HEK293 (cell line): ENCODE measurements at regions of chr7 and their contacts with region 1.

Region 1: GRCh38 chr7:29189743-29190201 is 4.8 kb upstream of the CHN2 start:
- H3K4me3 ChIP-seq: no peak overlapping the region
- H3K27ac ChIP-seq: peak overlapping the region; percentile 30; the same call in 1 of the 2 replicates
- H3K4me1 ChIP-seq: peaks cover 11% of the 10 kb centered on the region
- CTCF ChIP-seq: peak; percentile 58

Region 2: DNA sequence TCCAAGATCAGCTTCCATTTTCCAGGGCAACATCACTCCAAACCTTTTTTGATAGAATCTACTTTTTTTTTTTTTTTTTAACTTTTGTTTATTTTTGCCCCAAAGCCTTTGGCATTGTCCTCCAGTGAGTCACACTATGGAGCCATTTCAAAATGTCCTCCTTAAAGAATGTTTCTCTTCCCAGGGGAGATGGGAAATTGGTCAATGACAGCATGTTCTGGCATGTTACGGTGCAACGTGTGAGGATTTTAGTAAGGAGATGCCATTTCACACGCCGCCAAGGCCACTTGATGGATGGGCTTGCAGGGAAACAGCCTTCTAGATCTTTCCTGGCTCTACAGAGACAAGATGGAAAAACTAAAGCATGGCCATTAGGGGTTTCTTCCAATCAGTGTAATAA is 201.0 kb before region 1 on chr7:
- CTCF ChIA-PET with region 1: no interaction called
- POLR2A ChIA-PET with region 1: no interaction called
- H3K4me3 ChIP-seq: no peak overlapping the region
- H3K27ac ChIP-seq: no peak overlapping the region
- H3K4me1 ChIP-seq: no peaks in the 10 kb centered on the region; the same call in 1 of the 2 replicates
- CTCF ChIP-seq: no peak

Region 3: GRCh38 chr7:29156907-29157452 is 32.8 kb before region 1 on chr7:
- CTCF ChIA-PET with region 1: interaction called, 16 read pairs
- POLR2A ChIA-PET with region 1: no interaction called
- H3K4me3 ChIP-seq: no peak overlapping the region
- H3K27ac ChIP-seq: no peak overlapping the region
- H3K4me1 ChIP-seq: 0 out of 2 replicates have a peak, but pooled peaks cover 8% of the 10 kb centered on the region
- CTCF ChIP-seq: peak; percentile 17; the same call in 1 of the 2 replicates

Region 4: GRCh38 chr7:29204491-29205272 is 14.9 kb after region 1 on chr7:
- CTCF ChIA-PET with region 1: interaction called, 17 read pairs
- POLR2A ChIA-PET with region 1: no interaction called
- H3K4me3 ChIP-seq: no peak overlapping the region
- H3K27ac ChIP-seq: no peak overlapping the region
- H3K4me1 ChIP-seq: peaks cover 9% of the 10 kb centered on the region; the same call in 1 of the 2 replicates
- CTCF ChIP-seq: no peak

Region 5: DNA sequence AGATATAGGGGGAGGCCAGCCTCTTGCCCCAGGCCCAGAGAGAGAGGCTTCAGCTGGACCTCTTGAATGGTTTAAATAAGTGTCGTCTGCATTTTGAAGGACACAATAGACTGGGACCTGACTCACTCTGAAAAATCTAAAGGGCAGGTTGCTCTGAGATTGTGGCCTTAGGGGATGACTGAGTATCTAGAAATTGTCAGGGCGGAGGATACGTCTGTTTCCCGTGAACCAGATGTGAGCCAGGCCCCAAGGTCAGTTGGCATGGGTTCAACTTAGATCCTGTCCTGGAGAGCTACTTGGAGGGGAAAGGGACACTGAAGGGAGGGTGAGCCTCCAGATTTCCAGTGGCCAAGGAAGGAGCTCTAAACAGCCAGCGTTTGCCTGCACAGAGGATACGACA is 115.0 kb after region 1 on chr7:
- CTCF ChIA-PET with region 1: interaction called, 10 read pairs
- POLR2A ChIA-PET with region 1: no interaction called
- H3K4me3 ChIP-seq: no peak overlapping the region
- H3K27ac ChIP-seq: no peak overlapping the region
- H3K4me1 ChIP-seq: 0 out of 2 replicates have a peak, but pooled peaks cover 5% of the 10 kb centered on the region
- CTCF ChIP-seq: no peak

Region 6: GRCh38 chr7:29408841-29409243 is 219.1 kb after region 1 on chr7:
- CTCF ChIA-PET with region 1: interaction called, 57 read pairs
- POLR2A ChIA-PET with region 1: no interaction called
- H3K4me3 ChIP-seq: no peak overlapping the region
- H3K27ac ChIP-seq: no peak overlapping the region
- H3K4me1 ChIP-seq: no peaks in the 10 kb centered on the region
- CTCF ChIP-seq: peak; percentile 29; the same call in 1 of the 2 replicates